ENCODE measurements at regions of chr6 and their contacts with region 1.

Region 1: DNA sequence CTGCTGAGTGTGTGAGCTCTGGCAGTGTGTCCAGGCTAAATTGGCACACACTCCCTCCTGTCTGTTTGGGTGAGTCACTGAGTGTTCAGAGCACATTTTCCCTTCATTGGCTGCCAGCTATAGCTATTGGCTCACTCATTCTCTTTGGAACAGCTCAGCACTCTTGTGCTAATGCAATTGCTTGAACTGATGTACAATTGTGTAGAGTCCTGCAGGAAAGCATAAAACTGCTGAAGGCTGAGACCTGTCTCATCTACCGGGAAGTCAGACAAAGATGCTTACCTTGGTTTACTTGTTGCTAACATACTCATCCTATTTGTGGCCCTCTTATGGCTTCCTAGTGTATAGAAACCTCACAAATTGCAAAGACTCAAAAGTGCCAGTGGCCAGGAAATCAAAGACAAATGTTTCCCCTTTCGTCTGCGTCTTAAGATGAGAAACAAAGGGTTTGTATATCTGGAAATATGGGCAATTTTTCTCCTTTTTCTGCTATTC is 351.0 kb downstream of the BCKDHB start:
- DNase-seq: peak; percentile 62 to 67
- H3K4me3 ChIP-seq: no peak overlapping the region
- H3K27ac ChIP-seq: no peak overlapping the region
- H3K4me1 ChIP-seq: peaks cover 0 to 4% of the 10 kb centered on the region in 2 donors
- H3K27me3 ChIP-seq: no peaks in the 10 kb centered on the region
- CTCF ChIP-seq: no peak
- POLR2A ChIP-seq: no peak

Region 2: GRCh38 chr6:81340931-81341330 is 883.4 kb after region 1 on chr6:
- intact Hi-C with region 1: loop called (anchors 5 kb)
- DNase-seq: no peak
- H3K4me3 ChIP-seq: no peak overlapping the region
- H3K27ac ChIP-seq: no peak overlapping the region
- H3K4me1 ChIP-seq: no peaks in the 10 kb centered on the region
- H3K27me3 ChIP-seq: no peaks in the 10 kb centered on the region
- CTCF ChIP-seq: no peak
- POLR2A ChIP-seq: no peak